HEK293T (cell line): ENCODE measurements at regions of chr12 and their contacts with region 1.

Region 1: DNA sequence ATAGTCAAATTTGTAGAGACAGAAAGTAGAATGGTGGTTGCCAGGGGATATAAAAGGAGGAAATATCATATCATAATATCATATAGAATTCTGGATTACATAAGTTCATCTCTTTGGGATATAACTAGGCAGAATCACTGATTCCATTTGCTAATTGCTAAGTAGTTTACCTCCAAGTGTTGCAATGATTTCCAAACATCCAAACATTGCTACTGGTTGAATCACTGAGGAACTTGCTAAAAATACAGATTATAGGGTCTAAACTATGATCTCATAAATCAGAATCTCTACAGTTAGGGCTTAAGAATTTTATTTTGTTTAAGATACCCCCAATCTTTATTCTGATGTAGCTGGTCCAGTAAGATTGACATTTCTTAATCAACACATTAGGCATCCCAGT is 16.1 kb upstream of the TAS2R42 start:
- DNase-seq: no peak

Region 2: DNA sequence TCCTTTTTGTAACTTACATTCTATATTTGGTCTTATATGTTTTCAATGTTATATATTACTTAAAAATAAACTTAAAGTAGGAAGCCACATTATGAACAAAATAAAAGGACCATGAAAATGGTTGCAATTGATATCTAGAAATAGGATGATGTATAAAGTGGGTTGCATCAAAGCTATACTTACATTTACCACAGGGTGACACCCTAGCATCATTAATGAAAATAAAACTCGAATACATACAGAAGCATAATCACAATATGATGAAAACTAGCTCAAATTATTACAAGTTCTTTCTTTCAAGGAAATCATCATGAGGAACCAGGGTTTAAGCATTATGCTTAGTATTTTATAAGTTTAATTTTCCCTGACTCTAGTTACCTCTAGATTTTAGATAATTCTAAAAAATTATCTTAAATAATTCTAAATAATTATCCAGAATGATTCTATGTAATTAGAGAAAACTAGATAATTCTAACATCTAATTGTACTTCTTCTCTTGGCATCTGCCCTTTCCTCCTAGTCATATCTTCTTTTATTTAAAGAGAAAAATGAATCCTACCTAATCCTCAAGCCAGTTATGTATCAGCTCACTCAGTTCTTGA is 431.6 kb before region 1 on chr12:
- CTCF ChIA-PET with region 1: interaction called, 15 read pairs
- POLR2A ChIA-PET with region 1: no interaction called
- DNase-seq: peak; percentile 22